Activated CD4-positive, alpha-beta T cell treated with anti-CD3 and anti-CD28 coated beads for 36 hours (primary cell): ENCODE measurements at regions of chr10 and their contacts with region 1.

Region 1: DNA sequence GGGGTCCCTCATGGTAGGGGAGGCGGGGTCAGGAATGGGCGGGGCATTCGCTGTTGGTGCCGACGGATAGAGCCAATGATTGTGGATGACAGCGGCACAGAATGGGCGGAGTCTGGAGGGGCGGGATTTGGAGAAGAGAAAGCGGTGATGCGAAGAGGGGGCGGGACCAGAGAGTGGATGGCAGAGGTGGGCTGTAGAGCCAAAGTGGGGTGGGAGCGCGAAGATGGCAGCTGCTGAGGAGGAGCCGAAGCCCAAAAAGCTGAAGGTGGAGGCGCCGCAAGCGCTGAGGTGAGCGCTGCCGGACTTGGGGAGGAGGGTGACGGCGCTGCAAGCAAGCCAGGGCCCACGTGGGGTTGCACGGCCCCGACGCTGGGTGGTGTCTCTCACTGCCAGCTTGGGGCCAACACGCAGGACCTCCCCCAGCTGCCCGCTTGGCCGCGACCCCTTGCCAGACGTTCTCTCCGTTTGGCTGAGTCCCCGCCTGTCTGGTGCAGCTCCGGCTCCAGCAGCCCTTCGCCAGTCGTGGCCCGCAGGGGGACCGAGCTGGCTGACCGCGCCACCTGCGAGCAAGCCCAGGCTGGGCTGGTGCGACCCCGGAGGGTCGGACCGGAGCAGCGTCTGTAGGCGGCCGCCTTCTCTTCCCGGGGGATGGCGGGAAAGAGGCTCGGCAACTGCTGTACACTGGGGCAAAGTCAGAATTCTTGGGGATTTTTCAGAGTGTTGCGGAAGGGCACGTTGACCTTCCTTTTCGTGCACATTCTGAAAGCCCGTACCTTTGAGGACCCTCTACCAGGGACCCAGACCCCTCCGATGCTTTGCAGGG is at the start of gene ADK:
- DNase-seq: peak; percentile 100
- ATAC-seq: peak; percentile 97
- H3K4me3 Mint-ChIP-seq: no peak within 1 kb of the TSS
- H3K27ac Mint-ChIP-seq: peak within 1 kb of the TSS; percentile 85
- H3K4me1 Mint-ChIP-seq: peaks cover 45% of the 10 kb centered on the region
- H3K27me3 Mint-ChIP-seq: no peaks in the 10 kb centered on the region
- total RNA-seq, gene ADK: 53.7 to 55.0 TPM

Region 2: GRCh38 chr10:73874267-73875138 is 276.8 kb before region 1 on chr10 and contains the start of gene CAMK2G:
- CTCF ChIA-PET with region 1: interaction called, 3 read pairs
- POLR2A ChIA-PET with region 1: interaction called, 3 read pairs
- intact Hi-C with region 1: loop called in 1 of 2 experiments (anchors 1 kb)
- DNase-seq: peak; percentile 92
- ATAC-seq: peak; percentile 87
- H3K4me3 Mint-ChIP-seq: peak within 1 kb of the TSS; percentile 74
- H3K27ac Mint-ChIP-seq: peak within 1 kb of the TSS; percentile 81
- H3K4me1 Mint-ChIP-seq: peaks cover 67% of the 10 kb centered on the region
- H3K27me3 Mint-ChIP-seq: no peaks in the 10 kb centered on the region
- total RNA-seq, gene CAMK2G: 16.4 to 19.4 TPM

Region 3: GRCh38 chr10:73968098-73968521 is 183.2 kb before region 1 on chr10:
- CTCF ChIA-PET with region 1: no interaction called
- POLR2A ChIA-PET with region 1: no interaction called
- intact Hi-C with region 1: no loop called
- DNase-seq: no peak
- ATAC-seq: no peak
- H3K4me3 Mint-ChIP-seq: no peak overlapping the region
- H3K27ac Mint-ChIP-seq: no peak overlapping the region
- H3K4me1 Mint-ChIP-seq: no peaks in the 10 kb centered on the region
- H3K27me3 Mint-ChIP-seq: no peaks in the 10 kb centered on the region

Region 4: GRCh38 chr10:74176380-74177139 is 25.3 kb after region 1 on chr10:
- CTCF ChIA-PET with region 1: interaction called, 8 read pairs
- POLR2A ChIA-PET with region 1: interaction called, 19 read pairs
- intact Hi-C with region 1: loop called (anchors 1 kb)
- DNase-seq: peak; percentile 98
- ATAC-seq: peak; percentile 94
- H3K4me3 Mint-ChIP-seq: peak overlapping the region; percentile 89
- H3K27ac Mint-ChIP-seq: peak overlapping the region; percentile 95
- H3K4me1 Mint-ChIP-seq: peaks cover 37% of the 10 kb centered on the region
- H3K27me3 Mint-ChIP-seq: no peaks in the 10 kb centered on the region

Region 5: DNA sequence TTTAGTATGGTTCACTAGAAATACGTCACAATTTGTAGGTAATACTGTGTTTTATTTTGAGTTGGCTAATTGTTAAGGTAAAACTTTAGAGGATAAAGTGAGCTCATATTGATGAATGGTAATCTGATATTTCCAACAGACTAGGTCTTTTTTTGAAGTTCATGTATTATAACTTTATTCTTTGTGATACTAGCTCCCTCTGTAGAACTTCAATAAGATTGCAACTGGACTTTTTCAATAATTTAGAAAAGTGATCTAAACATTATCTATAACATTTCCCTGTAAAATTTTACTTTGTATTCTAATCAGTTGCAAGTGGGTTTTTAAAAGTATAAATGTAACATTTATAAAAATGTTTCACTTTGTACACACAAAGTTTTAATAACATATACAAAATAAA is 83.3 kb after region 1 on chr10:
- CTCF ChIA-PET with region 1: interaction called, 4 read pairs
- POLR2A ChIA-PET with region 1: no interaction called
- intact Hi-C with region 1: loop called in 1 of 2 experiments (anchors 2 kb)
- DNase-seq: no peak
- ATAC-seq: no peak
- H3K4me3 Mint-ChIP-seq: no peak overlapping the region
- H3K27ac Mint-ChIP-seq: no peak overlapping the region
- H3K4me1 Mint-ChIP-seq: no peaks in the 10 kb centered on the region
- H3K27me3 Mint-ChIP-seq: no peaks in the 10 kb centered on the region